Left ventricle myocardium inferior (tissue), 1 donor: ENCODE measurements at regions of chr2 and their contacts with region 1.

Region 1: GRCh38 chr2:54310311-54310710 is 54.3 kb upstream of the TSPYL6 start:
- DNase-seq: no peak
- H3K4me3 ChIP-seq: no peak overlapping the region
- H3K27ac ChIP-seq: no peak overlapping the region
- H3K4me1 ChIP-seq: no peaks in the 10 kb centered on the region
- H3K27me3 ChIP-seq: no peaks in the 10 kb centered on the region
- CTCF ChIP-seq: no peak

Region 2: DNA sequence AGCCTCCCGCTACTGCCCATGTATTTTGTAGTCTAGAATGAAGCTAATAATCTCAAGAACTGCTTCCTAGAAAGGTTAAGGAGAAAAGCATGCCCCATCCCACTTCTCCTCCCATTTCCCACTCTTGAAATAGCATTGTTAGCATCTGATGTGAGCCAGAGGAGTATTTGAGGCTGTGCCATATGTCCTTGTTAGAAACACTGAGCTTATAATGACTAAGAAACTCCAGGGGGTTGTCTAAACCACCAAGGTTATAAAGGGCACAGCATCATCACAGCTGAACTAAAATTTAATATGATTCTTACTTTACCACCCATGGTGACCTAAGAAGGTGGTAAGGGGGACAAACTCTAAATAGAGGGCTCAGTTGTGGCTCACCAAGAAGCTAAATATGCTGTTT is 70.9 kb before region 1 on chr2:
- intact Hi-C with region 1: loop called (anchors 10 kb)
- DNase-seq: no peak
- H3K4me3 ChIP-seq: no peak overlapping the region
- H3K27ac ChIP-seq: peak overlapping the region; percentile 77
- H3K4me1 ChIP-seq: peaks cover 27% of the 10 kb centered on the region
- H3K27me3 ChIP-seq: no peaks in the 10 kb centered on the region
- CTCF ChIP-seq: no peak

Region 3: DNA sequence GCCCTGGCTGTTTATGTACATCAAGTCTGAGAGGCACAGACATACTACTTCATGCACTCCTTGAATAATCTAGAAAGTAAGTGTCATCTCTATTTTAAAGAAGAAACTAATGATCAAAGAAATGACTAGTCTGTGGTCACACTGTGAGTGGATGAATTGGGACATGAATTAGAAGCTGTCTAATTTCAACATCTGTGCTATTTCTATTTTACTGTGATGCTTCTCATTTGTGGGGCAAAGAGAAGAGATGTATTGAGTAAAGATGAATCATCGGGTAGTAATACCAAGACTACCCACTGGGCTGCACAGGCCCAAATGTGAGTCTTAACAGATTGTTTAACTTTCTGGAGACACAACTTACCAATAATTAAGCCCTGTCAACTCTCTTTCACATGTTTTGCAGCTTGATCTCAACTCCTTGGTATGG is 1001.1 kb after region 1 on chr2:
- intact Hi-C with region 1: loop called (anchors 10 kb)
- DNase-seq: no peak
- H3K4me3 ChIP-seq: no peak overlapping the region
- H3K27ac ChIP-seq: no peak overlapping the region
- H3K4me1 ChIP-seq: peaks cover 5% of the 10 kb centered on the region
- H3K27me3 ChIP-seq: no peaks in the 10 kb centered on the region
- CTCF ChIP-seq: no peak